CD8-positive, alpha-beta T cell (primary cell): ENCODE measurements at regions of chr16 and their contacts with region 1.

Region 1: GRCh38 chr16:2980227-2981086 is at the start of gene PKMYT1:
- DNase-seq: peak; percentile 86 to 97 (median 95)
- ATAC-seq: peak; percentile 96
- H3K4me3 ChIP-seq: peak within 1 kb of the TSS; percentile 94 to 99
- H3K4me3 Mint-ChIP-seq: peak within 1 kb of the TSS; percentile 77
- H3K27ac ChIP-seq: peak within 1 kb of the TSS; percentile 79 to 86
- H3K27ac Mint-ChIP-seq: peak within 1 kb of the TSS; percentile 60
- H3K4me1 ChIP-seq: peaks cover 14% of the 10 kb centered on the region
- H3K4me1 Mint-ChIP-seq: peaks cover 16% of the 10 kb centered on the region
- H3K27me3 ChIP-seq: peaks cover 0 to 7% of the 10 kb centered on the region in 2 experiments
- H3K27me3 Mint-ChIP-seq: no peaks in the 10 kb centered on the region
- CTCF ChIP-seq: no peak
- total RNA-seq, gene PKMYT1: 0.44 to 0.81 TPM

Region 2: GRCh38 chr16:2911580-2912329 is 68.7 kb before region 1 on chr16 and contains the start of gene FLYWCH1:
- CTCF ChIA-PET with region 1: interaction called, 3 read pairs
- POLR2A ChIA-PET with region 1: interaction called, 3 read pairs
- intact Hi-C with region 1: loop called (anchors 1 to 5 kb)
- DNase-seq: peak; percentile 95 to 100 (median 99)
- ATAC-seq: peak; percentile 99
- H3K4me3 ChIP-seq: peak within 1 kb of the TSS; percentile 64 to 66
- H3K4me3 Mint-ChIP-seq: peak within 1 kb of the TSS; percentile 94
- H3K27ac ChIP-seq: peak within 1 kb of the TSS; percentile 59 to 71
- H3K27ac Mint-ChIP-seq: peak within 1 kb of the TSS; percentile 87
- H3K4me1 ChIP-seq: peaks cover 12% of the 10 kb centered on the region
- H3K4me1 Mint-ChIP-seq: peaks cover 21% of the 10 kb centered on the region
- H3K27me3 ChIP-seq: peaks cover 0 to 2% of the 10 kb centered on the region in 2 experiments
- H3K27me3 Mint-ChIP-seq: no peaks in the 10 kb centered on the region
- CTCF ChIP-seq: no peak
- total RNA-seq, gene FLYWCH1: 89.1 to 92.6 TPM

Region 3: DNA sequence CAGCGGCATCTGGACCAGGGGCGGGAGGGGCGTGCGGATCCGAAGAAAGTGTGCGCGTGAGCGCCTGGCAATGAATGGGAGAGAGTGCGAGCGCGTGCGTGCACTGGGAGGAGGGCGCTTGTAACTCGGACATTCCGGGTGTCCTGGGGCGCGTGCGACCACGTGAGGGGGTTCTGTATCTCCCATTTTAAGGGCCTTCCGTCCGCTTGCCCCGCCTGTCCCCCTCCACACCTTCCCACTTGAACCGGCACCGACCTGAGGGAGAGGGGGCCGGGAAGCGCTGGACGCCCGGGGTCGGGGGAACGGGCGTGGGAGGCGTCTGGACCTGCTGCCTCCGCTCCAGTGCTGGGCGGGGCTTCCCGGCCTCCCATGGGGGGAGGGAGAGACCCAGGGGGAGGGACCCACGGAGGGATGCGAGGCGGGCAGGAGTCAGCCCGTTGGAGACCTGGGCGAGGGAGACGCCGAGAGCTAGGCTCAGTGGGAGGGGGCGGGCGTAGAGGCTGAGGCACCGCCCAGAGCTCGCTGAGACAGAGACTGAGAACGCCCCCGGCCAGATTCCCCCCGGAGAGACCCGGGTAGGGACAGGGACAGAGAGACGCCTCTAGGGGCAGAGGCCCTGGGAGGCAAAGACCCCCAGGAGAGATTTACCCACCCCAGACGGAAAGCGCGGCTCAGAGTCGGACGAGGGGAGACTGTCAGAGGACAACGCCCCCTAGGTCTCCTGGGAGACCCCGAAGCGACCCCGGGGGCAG is 16.6 kb before region 1 on chr16 and contains the start of gene KREMEN2:
- CTCF ChIA-PET with region 1: interaction called, 46 read pairs
- POLR2A ChIA-PET with region 1: interaction called, 7 read pairs
- intact Hi-C with region 1: loop called (anchors 1 kb)
- DNase-seq: peak in 3 of 9 experiments; percentile 16 to 58 (median 48)
- ATAC-seq: peak; percentile 23
- H3K4me3 ChIP-seq: peak within 1 kb of the TSS; percentile 33 to 46
- H3K4me3 Mint-ChIP-seq: peak within 1 kb of the TSS; percentile 81
- H3K27ac ChIP-seq: no peak within 1 kb of the TSS
- H3K27ac Mint-ChIP-seq: no peak within 1 kb of the TSS
- H3K4me1 ChIP-seq: peaks cover 58% of the 10 kb centered on the region
- H3K4me1 Mint-ChIP-seq: peaks cover 35% of the 10 kb centered on the region
- H3K27me3 ChIP-seq: peaks cover 27 to 48% of the 10 kb centered on the region in 2 experiments
- H3K27me3 Mint-ChIP-seq: peaks cover 30% of the 10 kb centered on the region
- CTCF ChIP-seq: no peak
- total RNA-seq, gene KREMEN2: not detected

Region 4: DNA sequence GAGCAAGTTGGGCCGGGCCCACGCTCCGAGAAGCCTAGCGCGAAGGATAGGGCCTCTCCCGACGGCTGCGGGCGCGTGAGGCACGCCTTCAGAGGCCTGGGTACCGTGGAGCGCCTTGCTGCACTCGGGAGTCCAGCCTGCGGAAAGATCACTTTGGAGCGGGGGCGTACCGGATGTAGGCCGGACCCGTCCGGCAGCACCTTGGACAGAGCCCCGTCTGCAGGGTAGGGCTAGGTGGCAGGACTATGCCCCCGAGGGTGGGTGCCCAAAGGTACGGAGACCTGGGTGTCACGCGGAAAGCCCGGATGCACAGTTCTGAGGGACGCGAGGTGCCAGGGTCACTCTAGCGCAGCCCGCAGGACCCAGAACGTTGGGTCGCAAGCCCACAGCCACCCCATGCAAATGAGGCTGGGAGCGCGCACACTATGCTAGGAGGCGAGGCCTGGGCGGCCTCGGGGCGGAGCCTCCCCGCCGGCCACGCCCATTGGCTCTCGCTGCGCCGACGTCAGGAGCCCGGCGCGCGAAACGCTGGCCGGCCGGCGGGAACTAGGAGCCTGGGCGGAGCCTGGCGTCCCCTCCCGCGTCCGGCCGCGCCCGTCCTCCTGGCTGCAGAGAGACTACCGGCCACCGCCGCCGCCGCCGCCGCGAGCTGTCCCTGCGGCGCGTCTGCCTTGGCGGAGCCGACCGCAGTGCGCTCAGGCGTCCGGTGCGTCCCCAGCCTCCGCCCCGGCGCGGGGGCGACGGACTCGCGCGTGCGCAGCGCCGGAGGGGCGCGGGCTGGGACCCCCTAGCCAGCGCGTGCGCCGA is 11.5 kb before region 1 on chr16 and contains the start of gene PAQR4:
- CTCF ChIA-PET with region 1: interaction called, 9 read pairs
- POLR2A ChIA-PET with region 1: interaction called, 7 read pairs
- intact Hi-C with region 1: loop called (anchors 1 kb)
- DNase-seq: peak; percentile 43 to 89 (median 71)
- ATAC-seq: peak; percentile 72
- H3K4me3 ChIP-seq: peak within 1 kb of the TSS; percentile 48 to 50
- H3K4me3 Mint-ChIP-seq: peak within 1 kb of the TSS; percentile 74
- H3K27ac ChIP-seq: no peak within 1 kb of the TSS
- H3K27ac Mint-ChIP-seq: no peak within 1 kb of the TSS
- H3K4me1 ChIP-seq: peaks cover 48% of the 10 kb centered on the region
- H3K4me1 Mint-ChIP-seq: peaks cover 23% of the 10 kb centered on the region
- H3K27me3 ChIP-seq: peaks cover 33% of the 10 kb centered on the region in 2 experiments
- H3K27me3 Mint-ChIP-seq: peaks cover 30% of the 10 kb centered on the region
- CTCF ChIP-seq: no peak
- total RNA-seq, gene PAQR4: 0.14 to 0.22 TPM

Region 5: DNA sequence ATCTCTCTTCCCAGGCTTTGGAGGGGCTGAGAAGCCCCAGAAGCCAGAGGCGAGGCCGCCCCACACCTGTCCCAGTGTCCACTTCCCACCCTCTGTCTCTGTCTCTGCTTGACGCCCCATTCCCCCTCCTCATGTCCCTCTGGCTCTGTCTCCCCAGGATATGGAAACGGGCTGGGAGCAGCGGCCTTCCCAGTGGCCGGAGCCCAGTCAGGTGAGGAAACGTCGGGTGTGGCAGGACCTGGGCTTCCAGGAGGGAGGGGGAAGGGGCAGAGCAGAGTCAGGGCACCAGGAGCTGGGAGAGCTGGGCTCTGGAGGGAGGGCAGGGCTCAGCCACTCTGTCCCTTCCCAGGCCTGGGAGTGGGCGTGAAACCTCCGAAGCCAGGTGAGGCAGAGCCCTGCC is 10.4 kb after region 1 on chr16:
- CTCF ChIA-PET with region 1: no interaction called
- POLR2A ChIA-PET with region 1: no interaction called
- intact Hi-C with region 1: no loop called
- DNase-seq: no peak
- ATAC-seq: no peak
- H3K4me3 ChIP-seq: no peak overlapping the region
- H3K4me3 Mint-ChIP-seq: no peak overlapping the region
- H3K27ac ChIP-seq: no peak overlapping the region
- H3K27ac Mint-ChIP-seq: no peak overlapping the region
- H3K4me1 ChIP-seq: no peaks in the 10 kb centered on the region
- H3K4me1 Mint-ChIP-seq: no peaks in the 10 kb centered on the region
- H3K27me3 ChIP-seq: peaks cover 0 to 3% of the 10 kb centered on the region in 2 experiments
- H3K27me3 Mint-ChIP-seq: no peaks in the 10 kb centered on the region
- CTCF ChIP-seq: no peak

Region 6: DNA sequence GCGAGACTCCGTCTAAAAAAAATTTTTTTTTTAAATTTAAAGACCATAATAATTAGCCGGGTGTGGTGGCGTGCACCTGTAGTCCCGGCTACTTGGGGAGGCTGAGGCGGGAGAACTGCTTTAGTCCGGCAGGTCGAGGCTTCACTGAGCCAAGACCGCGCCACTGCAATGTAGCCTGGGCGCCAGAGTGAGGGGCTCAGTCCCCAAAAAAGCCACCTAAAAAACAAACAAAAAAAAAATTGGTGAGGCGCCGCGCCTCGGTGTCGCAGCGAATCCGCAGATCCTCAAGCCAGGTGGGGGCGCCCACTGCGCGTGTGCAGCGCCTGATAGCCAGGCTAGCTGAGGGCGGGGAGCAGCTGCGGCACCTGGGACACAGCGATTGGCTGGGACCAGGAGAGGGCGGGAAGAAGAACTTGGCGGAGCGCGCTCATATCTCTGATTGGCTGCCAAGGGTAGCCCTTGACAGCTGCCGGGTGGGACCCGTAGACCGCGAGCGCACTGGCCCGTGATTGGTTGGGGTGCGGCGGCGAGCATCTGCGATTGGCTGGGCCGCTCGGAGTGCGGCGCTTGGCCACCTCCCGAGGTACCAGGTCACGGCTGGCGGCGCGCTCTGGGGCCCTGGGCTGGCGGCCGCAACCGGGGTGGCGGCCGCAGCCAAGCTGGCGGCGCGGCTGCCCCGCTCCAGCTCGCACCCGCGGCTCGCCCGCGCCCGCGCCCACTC is 23.3 kb after region 1 on chr16:
- CTCF ChIA-PET with region 1: interaction called, 3 read pairs
- POLR2A ChIA-PET with region 1: no interaction called
- intact Hi-C with region 1: loop called in 1 of 2 experiments (anchors 2 kb)
- DNase-seq: peak; percentile 91 to 99 (median 95)
- ATAC-seq: peak; percentile 99
- H3K4me3 ChIP-seq: no peak overlapping the region
- H3K4me3 Mint-ChIP-seq: peak overlapping the region; percentile 81
- H3K27ac ChIP-seq: no peak overlapping the region
- H3K27ac Mint-ChIP-seq: no peak overlapping the region
- H3K4me1 ChIP-seq: peaks cover 21% of the 10 kb centered on the region
- H3K4me1 Mint-ChIP-seq: peaks cover 28% of the 10 kb centered on the region
- H3K27me3 ChIP-seq: peaks cover 0 to 4% of the 10 kb centered on the region in 2 experiments
- H3K27me3 Mint-ChIP-seq: no peaks in the 10 kb centered on the region
- CTCF ChIP-seq: peak; percentile 54

Region 7: DNA sequence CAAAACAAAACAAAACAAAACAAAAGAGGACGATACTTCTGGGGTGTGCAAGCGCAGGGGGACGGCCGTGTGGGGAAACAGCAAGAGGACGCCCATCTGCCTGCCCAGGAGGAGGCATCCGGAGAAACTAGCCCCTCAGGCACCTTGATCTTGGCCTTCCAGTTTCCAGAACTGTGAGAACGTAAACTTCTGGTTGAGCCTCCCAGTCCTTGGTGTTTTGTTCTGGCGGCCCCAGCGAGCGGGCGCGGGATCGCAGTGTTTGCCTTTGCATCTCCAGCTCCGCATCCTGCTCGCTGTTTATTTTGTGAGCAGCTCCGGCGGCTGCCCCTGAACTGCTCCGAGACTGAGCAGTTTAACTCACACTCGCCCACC is 64.9 kb after region 1 on chr16:
- CTCF ChIA-PET with region 1: no interaction called
- POLR2A ChIA-PET with region 1: no interaction called
- intact Hi-C with region 1: no loop called
- DNase-seq: peak in 5 of 9 experiments; percentile 38 to 56 (median 49)
- ATAC-seq: peak; percentile 69
- H3K4me3 ChIP-seq: peak overlapping the region; percentile 31 to 55
- H3K4me3 Mint-ChIP-seq: peak overlapping the region; percentile 80
- H3K27ac ChIP-seq: no peak overlapping the region
- H3K27ac Mint-ChIP-seq: peak overlapping the region; percentile 22
- H3K4me1 ChIP-seq: peaks cover 20% of the 10 kb centered on the region
- H3K4me1 Mint-ChIP-seq: peaks cover 20% of the 10 kb centered on the region
- H3K27me3 ChIP-seq: peaks cover 26 to 46% of the 10 kb centered on the region in 2 experiments
- H3K27me3 Mint-ChIP-seq: peaks cover 26% of the 10 kb centered on the region
- CTCF ChIP-seq: no peak

Region 8: GRCh38 chr16:3106205-3106928 is 125.9 kb after region 1 on chr16:
- CTCF ChIA-PET with region 1: no interaction called
- POLR2A ChIA-PET with region 1: no interaction called
- intact Hi-C with region 1: loop called in 1 of 2 experiments (anchors 1 kb)
- DNase-seq: peak; percentile 79 to 95 (median 90)
- ATAC-seq: peak; percentile 94
- H3K4me3 ChIP-seq: peak overlapping the region; percentile 74 to 77
- H3K4me3 Mint-ChIP-seq: peak overlapping the region; percentile 86
- H3K27ac ChIP-seq: peak overlapping the region; percentile 75 to 93
- H3K27ac Mint-ChIP-seq: peak overlapping the region; percentile 89
- H3K4me1 ChIP-seq: peaks cover 24% of the 10 kb centered on the region
- H3K4me1 Mint-ChIP-seq: peaks cover 26% of the 10 kb centered on the region
- H3K27me3 ChIP-seq: no peaks in the 10 kb centered on the region
- H3K27me3 Mint-ChIP-seq: no peaks in the 10 kb centered on the region
- CTCF ChIP-seq: no peak

Region 9: GRCh38 chr16:4116337-4117249 is 1136.1 kb after region 1 on chr16 and contains the start of gene ADCY9:
- CTCF ChIA-PET with region 1: no interaction called
- POLR2A ChIA-PET with region 1: no interaction called
- intact Hi-C with region 1: loop called in 1 of 2 experiments (anchors 5 kb)
- DNase-seq: peak; percentile 31 to 92 (median 74)
- ATAC-seq: peak; percentile 77
- H3K4me3 ChIP-seq: peak within 1 kb of the TSS; percentile 55 to 64
- H3K4me3 Mint-ChIP-seq: peak within 1 kb of the TSS; percentile 87
- H3K27ac ChIP-seq: peak within 1 kb of the TSS in 1 of 2 experiments; percentile 39
- H3K27ac Mint-ChIP-seq: peak within 1 kb of the TSS; percentile 52
- H3K4me1 ChIP-seq: peaks cover 33% of the 10 kb centered on the region
- H3K4me1 Mint-ChIP-seq: peaks cover 40% of the 10 kb centered on the region
- H3K27me3 ChIP-seq: no peaks in the 10 kb centered on the region
- H3K27me3 Mint-ChIP-seq: peaks cover 3% of the 10 kb centered on the region
- CTCF ChIP-seq: no peak
- total RNA-seq, gene ADCY9: 4.2 to 4.3 TPM